CD8-positive, alpha-beta T cell (primary cell): ENCODE measurements at regions of chr5 and their contacts with region 1.

Region 1: GRCh38 chr5:150846654-150847333 is 473 bp downstream of the IRGM start:
- DNase-seq: peak in 8 of 9 experiments; percentile 39 to 93 (median 64)
- ATAC-seq: peak; percentile 90
- H3K4me3 ChIP-seq: peak overlapping the region; percentile 7 to 46
- H3K4me3 Mint-ChIP-seq: peak overlapping the region; percentile 78
- H3K27ac ChIP-seq: peak overlapping the region; percentile 4 to 57
- H3K27ac Mint-ChIP-seq: peak overlapping the region; percentile 87
- H3K4me1 ChIP-seq: no peaks in the 10 kb centered on the region
- H3K4me1 Mint-ChIP-seq: peaks cover 22% of the 10 kb centered on the region
- H3K27me3 ChIP-seq: no peaks in the 10 kb centered on the region
- H3K27me3 Mint-ChIP-seq: no peaks in the 10 kb centered on the region
- CTCF ChIP-seq: peak; percentile 75

Region 2: GRCh38 chr5:149834246-149834855 is 1012.4 kb before region 1 on chr5:
- CTCF ChIA-PET with region 1: no interaction called
- POLR2A ChIA-PET with region 1: no interaction called
- intact Hi-C with region 1: no loop called
- DNase-seq: peak in 8 of 9 experiments; percentile 20 to 75 (median 45)
- ATAC-seq: peak; percentile 62
- H3K4me3 ChIP-seq: no peak overlapping the region
- H3K4me3 Mint-ChIP-seq: no peak overlapping the region
- H3K27ac ChIP-seq: no peak overlapping the region
- H3K27ac Mint-ChIP-seq: no peak overlapping the region
- H3K4me1 ChIP-seq: no peaks in the 10 kb centered on the region
- H3K4me1 Mint-ChIP-seq: no peaks in the 10 kb centered on the region
- H3K27me3 ChIP-seq: no peaks in the 10 kb centered on the region
- H3K27me3 Mint-ChIP-seq: no peaks in the 10 kb centered on the region
- CTCF ChIP-seq: peak; percentile 52

Region 3: DNA sequence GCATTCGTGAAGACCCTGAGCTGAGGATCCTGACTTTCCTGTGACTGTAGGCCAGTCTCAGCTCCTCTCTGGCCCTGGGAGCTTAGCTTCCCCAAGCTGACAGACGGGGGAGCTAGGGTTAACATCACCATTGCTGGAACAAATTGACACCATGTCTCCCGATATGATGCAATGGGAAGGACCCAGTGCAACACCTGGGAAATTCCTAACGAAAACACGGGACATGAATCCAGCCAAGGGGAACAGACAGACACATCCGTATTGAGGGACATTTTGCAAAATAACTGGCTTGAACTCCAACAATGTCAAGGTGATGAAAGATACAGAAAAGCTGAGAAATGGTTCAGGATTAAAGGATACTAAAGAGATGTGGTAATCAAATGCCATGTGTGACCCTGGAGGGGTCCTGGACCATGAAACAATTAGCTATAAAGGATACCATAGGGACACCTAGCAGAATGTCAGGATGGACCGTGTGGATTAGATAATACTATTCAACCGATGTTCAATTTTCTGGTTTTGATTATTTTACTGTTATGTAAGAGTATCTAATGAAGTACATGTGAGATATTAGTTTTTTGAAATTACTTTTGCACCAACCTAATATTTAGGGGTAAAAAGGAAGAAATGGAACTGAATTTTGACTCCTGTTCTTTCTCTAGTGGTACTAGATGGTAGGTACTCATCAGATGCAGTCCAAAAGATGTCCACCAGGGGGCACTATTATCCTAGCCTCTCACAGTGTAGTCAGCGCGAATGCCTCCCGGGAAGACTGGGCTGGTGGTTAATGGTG is 286.2 kb before region 1 on chr5:
- CTCF ChIA-PET with region 1: interaction called, 100 read pairs
- POLR2A ChIA-PET with region 1: interaction called, 3 read pairs
- intact Hi-C with region 1: loop called (anchors 1 kb)
- DNase-seq: peak; percentile 68 to 93 (median 84)
- ATAC-seq: peak; percentile 97
- H3K4me3 ChIP-seq: no peak overlapping the region
- H3K4me3 Mint-ChIP-seq: no peak overlapping the region
- H3K27ac ChIP-seq: no peak overlapping the region
- H3K27ac Mint-ChIP-seq: no peak overlapping the region
- H3K4me1 ChIP-seq: no peaks in the 10 kb centered on the region
- H3K4me1 Mint-ChIP-seq: no peaks in the 10 kb centered on the region
- H3K27me3 ChIP-seq: no peaks in the 10 kb centered on the region
- H3K27me3 Mint-ChIP-seq: peaks cover 3% of the 10 kb centered on the region
- CTCF ChIP-seq: peak; percentile 92

Region 4: GRCh38 chr5:150656191-150657132 is 190.3 kb before region 1 on chr5:
- CTCF ChIA-PET with region 1: interaction called, 6 read pairs
- POLR2A ChIA-PET with region 1: no interaction called
- intact Hi-C with region 1: loop called in 1 of 2 experiments (anchors 5 kb)
- DNase-seq: peak; percentile 61 to 90 (median 80)
- ATAC-seq: peak; percentile 93
- H3K4me3 ChIP-seq: peak overlapping the region; percentile 51 to 63
- H3K4me3 Mint-ChIP-seq: peak overlapping the region; percentile 78
- H3K27ac ChIP-seq: no peak overlapping the region
- H3K27ac Mint-ChIP-seq: no peak overlapping the region
- H3K4me1 ChIP-seq: peaks cover 6% of the 10 kb centered on the region
- H3K4me1 Mint-ChIP-seq: peaks cover 4% of the 10 kb centered on the region
- H3K27me3 ChIP-seq: no peaks in the 10 kb centered on the region
- H3K27me3 Mint-ChIP-seq: no peaks in the 10 kb centered on the region
- CTCF ChIP-seq: peak; percentile 53

Region 5: DNA sequence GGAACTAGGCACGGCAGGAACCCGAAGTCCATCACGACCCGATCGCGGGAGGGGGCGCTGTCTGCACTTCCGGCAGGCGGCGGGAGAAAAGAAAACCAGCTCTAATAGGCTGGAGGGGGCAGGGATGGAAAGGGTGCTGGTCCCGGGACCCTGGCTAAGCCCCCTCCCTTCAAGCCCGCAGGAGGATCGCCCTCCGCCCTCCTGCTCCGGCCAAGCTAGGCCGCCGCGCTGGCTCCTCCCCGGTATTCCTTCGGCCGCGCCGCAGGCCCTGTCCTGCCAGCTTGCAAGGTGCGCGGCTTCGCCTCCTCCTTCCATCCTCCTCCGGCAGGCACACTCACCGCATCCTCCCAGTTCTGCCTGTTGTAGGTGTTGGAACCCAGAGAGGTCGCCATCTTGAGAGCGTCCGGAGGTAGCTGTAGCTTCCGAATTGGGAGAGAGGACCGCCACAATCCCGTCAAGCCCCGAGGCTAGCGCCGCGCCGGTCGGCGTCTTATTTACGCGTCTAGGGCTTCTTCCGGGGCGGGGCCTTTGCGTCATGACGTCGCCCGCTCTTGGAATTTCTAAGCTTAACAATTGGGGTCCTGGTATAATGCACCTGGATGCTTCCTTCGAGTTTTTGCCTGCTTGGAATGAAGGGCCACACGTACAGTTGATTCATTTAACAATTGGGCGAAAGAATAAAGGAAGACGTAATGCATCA is 146.1 kb before region 1 on chr5 and contains the start of gene RBM22:
- CTCF ChIA-PET with region 1: interaction called, 24 read pairs
- POLR2A ChIA-PET with region 1: interaction called, 21 read pairs
- intact Hi-C with region 1: loop called (anchors 1 kb)
- DNase-seq: peak; percentile 82 to 96 (median 94)
- ATAC-seq: peak; percentile 90
- H3K4me3 ChIP-seq: peak within 1 kb of the TSS; percentile 80 to 81
- H3K4me3 Mint-ChIP-seq: no peak within 1 kb of the TSS
- H3K27ac ChIP-seq: peak within 1 kb of the TSS; percentile 94 to 97
- H3K27ac Mint-ChIP-seq: no peak within 1 kb of the TSS
- H3K4me1 ChIP-seq: peaks cover 19% of the 10 kb centered on the region
- H3K4me1 Mint-ChIP-seq: peaks cover 2% of the 10 kb centered on the region
- H3K27me3 ChIP-seq: no peaks in the 10 kb centered on the region
- H3K27me3 Mint-ChIP-seq: no peaks in the 10 kb centered on the region
- CTCF ChIP-seq: peak; percentile 85
- total RNA-seq, gene RBM22: 119 to 125 TPM

Region 6: GRCh38 chr5:150789943-150790611 is 56.7 kb before region 1 on chr5:
- CTCF ChIA-PET with region 1: interaction called, 12 read pairs
- POLR2A ChIA-PET with region 1: no interaction called
- intact Hi-C with region 1: no loop called
- DNase-seq: peak in 8 of 9 experiments; percentile 35 to 79 (median 65)
- ATAC-seq: peak; percentile 95
- H3K4me3 ChIP-seq: peak overlapping the region in 1 of 2 experiments; percentile 24
- H3K4me3 Mint-ChIP-seq: peak overlapping the region; percentile 57
- H3K27ac ChIP-seq: peak overlapping the region in 1 of 2 experiments; percentile 50
- H3K27ac Mint-ChIP-seq: peak overlapping the region; percentile 52
- H3K4me1 ChIP-seq: peaks cover 14% of the 10 kb centered on the region
- H3K4me1 Mint-ChIP-seq: peaks cover 43% of the 10 kb centered on the region
- H3K27me3 ChIP-seq: no peaks in the 10 kb centered on the region
- H3K27me3 Mint-ChIP-seq: no peaks in the 10 kb centered on the region
- CTCF ChIP-seq: no peak

Region 7: GRCh38 chr5:150801117-150801927 is 45.5 kb before region 1 on chr5:
- CTCF ChIA-PET with region 1: interaction called, 86 read pairs
- POLR2A ChIA-PET with region 1: interaction called, 11 read pairs
- intact Hi-C with region 1: loop called (anchors 1 kb)
- DNase-seq: peak in 2 of 9 experiments; percentile 62 to 71
- ATAC-seq: peak; percentile 54
- H3K4me3 ChIP-seq: no peak overlapping the region
- H3K4me3 Mint-ChIP-seq: no peak overlapping the region
- H3K27ac ChIP-seq: no peak overlapping the region
- H3K27ac Mint-ChIP-seq: no peak overlapping the region
- H3K4me1 ChIP-seq: peaks cover 5% of the 10 kb centered on the region
- H3K4me1 Mint-ChIP-seq: peaks cover 4% of the 10 kb centered on the region
- H3K27me3 ChIP-seq: no peaks in the 10 kb centered on the region
- H3K27me3 Mint-ChIP-seq: peaks cover 4% of the 10 kb centered on the region
- CTCF ChIP-seq: peak; percentile 78

Region 8: DNA sequence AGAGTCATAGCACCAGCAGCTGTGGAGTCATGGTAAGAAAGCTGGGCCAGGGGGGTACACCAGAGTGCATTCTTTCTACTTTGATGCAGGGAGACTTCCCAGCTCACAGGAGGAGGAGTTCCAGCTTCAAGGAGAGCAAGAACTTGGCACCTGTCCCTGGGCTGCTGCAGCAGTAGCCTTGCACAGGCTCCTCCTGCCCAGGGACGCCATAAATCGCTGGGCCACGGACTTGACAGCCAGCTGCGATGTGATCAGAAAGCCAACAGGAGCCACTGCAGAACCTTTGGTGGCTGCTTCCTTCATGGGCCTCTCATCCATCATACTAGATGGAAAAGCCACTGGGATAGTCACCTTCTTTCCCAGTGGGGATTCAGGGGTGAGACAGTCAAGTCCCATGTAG is 1323.6 kb after region 1 on chr5:
- CTCF ChIA-PET with region 1: no interaction called
- POLR2A ChIA-PET with region 1: no interaction called
- intact Hi-C with region 1: no loop called
- DNase-seq: no peak
- ATAC-seq: no peak
- H3K4me3 ChIP-seq: no peak overlapping the region
- H3K4me3 Mint-ChIP-seq: no peak overlapping the region
- H3K27ac ChIP-seq: no peak overlapping the region
- H3K27ac Mint-ChIP-seq: no peak overlapping the region
- H3K4me1 ChIP-seq: no peaks in the 10 kb centered on the region
- H3K4me1 Mint-ChIP-seq: no peaks in the 10 kb centered on the region
- H3K27me3 ChIP-seq: no peaks in the 10 kb centered on the region
- H3K27me3 Mint-ChIP-seq: peaks cover 3% of the 10 kb centered on the region
- CTCF ChIP-seq: no peak